Activated naive CD4-positive, alpha-beta T cell treated with anti-CD3 and anti-CD28 coated beads for 36 hours (primary cell): ENCODE measurements at regions of chr3 and their contacts with region 1.

Region 1: DNA sequence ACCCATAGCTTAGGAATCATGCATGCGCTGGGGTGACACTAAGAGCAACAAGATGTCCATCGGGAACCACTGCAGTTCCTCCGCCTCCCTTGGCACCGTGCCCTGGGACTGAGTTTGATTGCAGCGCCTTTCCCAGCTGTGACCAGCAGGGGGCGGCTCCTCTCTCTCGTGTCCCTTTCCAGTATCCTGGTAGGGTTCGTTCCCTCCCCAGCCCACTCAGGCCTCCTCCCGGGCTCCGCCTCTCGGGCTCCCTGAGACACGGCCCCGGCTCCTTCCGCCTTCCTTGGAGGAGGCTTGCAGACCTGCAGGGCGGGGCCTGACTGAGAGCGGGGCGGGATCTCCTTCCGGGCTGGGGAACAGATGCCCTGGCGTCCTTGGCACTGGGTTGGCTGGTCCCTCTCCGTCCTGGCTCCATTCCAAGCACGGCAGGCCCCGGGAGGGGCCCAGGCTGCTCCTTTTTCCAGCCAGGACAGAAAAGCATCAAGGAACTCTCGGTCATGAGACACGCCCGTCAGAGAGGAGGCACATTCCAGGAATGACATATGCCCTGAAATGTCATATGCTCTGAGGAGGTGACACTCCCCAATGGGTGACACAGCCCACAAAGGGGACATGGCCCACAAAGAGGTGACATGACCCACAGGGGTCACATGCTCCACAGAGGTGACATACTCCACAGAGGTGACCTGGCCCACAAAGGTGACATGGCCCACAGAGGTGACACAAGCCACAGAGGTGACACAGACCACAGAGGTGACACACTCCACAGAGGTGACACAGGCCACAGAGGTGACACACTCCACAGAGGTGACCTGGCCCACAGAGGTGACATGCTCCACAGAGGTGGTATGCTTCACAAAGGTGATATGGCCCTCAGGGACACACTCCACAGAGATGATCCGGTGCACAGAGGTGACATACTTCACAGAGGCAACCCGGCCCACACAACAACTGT is 79.0 kb downstream of the ABHD5 start:
- DNase-seq: peak; percentile 88
- H3K4me3 Mint-ChIP-seq: peak overlapping the region; percentile 28
- H3K27ac Mint-ChIP-seq: no peak overlapping the region
- H3K4me1 Mint-ChIP-seq: peaks cover 16% of the 10 kb centered on the region
- H3K27me3 Mint-ChIP-seq: peaks cover 6% of the 10 kb centered on the region

Region 2: DNA sequence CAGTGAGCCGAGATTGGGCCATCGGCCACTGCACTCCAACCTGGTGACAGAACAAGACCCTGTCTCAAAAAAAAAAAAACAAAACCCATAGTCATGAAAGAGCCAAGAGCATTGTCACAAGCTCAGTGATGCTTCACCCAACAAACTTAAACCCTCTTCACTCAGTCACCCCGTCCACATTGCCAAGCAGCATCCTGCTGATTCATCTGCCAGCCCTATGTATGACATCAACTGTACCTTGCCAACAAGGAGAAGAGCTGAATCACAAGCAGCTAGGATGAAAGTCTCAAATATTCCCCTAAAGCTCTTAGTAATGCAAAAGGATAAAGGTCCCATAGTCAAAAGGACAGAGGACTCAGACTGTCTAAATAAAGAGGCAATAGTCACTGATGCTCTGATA is 237.9 kb before region 1 on chr3:
- CTCF ChIA-PET with region 1: no interaction called
- intact Hi-C with region 1: no loop called
- DNase-seq: peak; percentile 20
- H3K4me3 Mint-ChIP-seq: no peak overlapping the region
- H3K27ac Mint-ChIP-seq: no peak overlapping the region
- H3K4me1 Mint-ChIP-seq: peaks cover under 1% of the 10 kb centered on the region
- H3K27me3 Mint-ChIP-seq: no peaks in the 10 kb centered on the region

Region 3: DNA sequence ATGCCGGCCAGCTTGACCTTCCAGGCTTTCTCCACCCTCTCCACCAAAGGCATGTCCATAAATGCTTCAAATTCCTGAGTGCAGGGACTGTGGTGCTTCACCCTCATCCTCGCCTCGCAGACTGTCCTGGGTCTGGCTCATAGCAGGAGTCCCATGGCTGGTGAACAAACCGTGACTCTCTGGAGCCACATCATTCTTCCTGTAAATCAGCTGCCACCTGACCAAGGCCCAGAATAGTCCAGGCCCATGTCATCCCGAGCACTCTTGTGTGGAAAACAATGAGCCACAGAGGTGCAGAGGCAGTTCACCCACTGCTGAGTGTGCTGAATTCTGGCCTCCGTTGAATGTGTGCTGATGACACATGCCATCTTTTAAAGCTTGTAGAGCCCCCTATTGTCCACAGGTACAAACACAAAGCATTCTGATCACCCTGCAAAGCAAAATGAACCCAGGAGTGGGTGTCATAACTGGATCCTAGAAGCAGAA is 10.4 kb before region 1 on chr3:
- CTCF ChIA-PET with region 1: interaction called, 11 read pairs
- intact Hi-C with region 1: no loop called
- DNase-seq: peak; percentile 17
- H3K4me3 Mint-ChIP-seq: no peak overlapping the region
- H3K27ac Mint-ChIP-seq: no peak overlapping the region
- H3K4me1 Mint-ChIP-seq: peaks cover 46% of the 10 kb centered on the region
- H3K27me3 Mint-ChIP-seq: no peaks in the 10 kb centered on the region

Region 4: GRCh38 chr3:44104668-44105321 is 335.0 kb after region 1 on chr3:
- CTCF ChIA-PET with region 1: no interaction called
- intact Hi-C with region 1: loop called (anchors 5 kb)
- DNase-seq: peak; percentile 79
- H3K4me3 Mint-ChIP-seq: no peak overlapping the region
- H3K27ac Mint-ChIP-seq: no peak overlapping the region
- H3K4me1 Mint-ChIP-seq: peaks cover 14% of the 10 kb centered on the region
- H3K27me3 Mint-ChIP-seq: peaks cover 5% of the 10 kb centered on the region

Region 5: GRCh38 chr3:44136421-44136820 is 366.7 kb after region 1 on chr3:
- CTCF ChIA-PET with region 1: no interaction called
- intact Hi-C with region 1: loop called (anchors 1 kb)
- DNase-seq: peak; percentile 7
- H3K4me3 Mint-ChIP-seq: no peak overlapping the region
- H3K27ac Mint-ChIP-seq: no peak overlapping the region
- H3K4me1 Mint-ChIP-seq: no peaks in the 10 kb centered on the region
- H3K27me3 Mint-ChIP-seq: peaks cover 10% of the 10 kb centered on the region